ENCODE measurements at regions of chr20 and their contacts with region 1.

Region 1: GRCh38 chr20:36199345-36200257 is 36.7 kb upstream of the AAR2 start:
- DNase-seq: peak; percentile 86

Region 2: DNA sequence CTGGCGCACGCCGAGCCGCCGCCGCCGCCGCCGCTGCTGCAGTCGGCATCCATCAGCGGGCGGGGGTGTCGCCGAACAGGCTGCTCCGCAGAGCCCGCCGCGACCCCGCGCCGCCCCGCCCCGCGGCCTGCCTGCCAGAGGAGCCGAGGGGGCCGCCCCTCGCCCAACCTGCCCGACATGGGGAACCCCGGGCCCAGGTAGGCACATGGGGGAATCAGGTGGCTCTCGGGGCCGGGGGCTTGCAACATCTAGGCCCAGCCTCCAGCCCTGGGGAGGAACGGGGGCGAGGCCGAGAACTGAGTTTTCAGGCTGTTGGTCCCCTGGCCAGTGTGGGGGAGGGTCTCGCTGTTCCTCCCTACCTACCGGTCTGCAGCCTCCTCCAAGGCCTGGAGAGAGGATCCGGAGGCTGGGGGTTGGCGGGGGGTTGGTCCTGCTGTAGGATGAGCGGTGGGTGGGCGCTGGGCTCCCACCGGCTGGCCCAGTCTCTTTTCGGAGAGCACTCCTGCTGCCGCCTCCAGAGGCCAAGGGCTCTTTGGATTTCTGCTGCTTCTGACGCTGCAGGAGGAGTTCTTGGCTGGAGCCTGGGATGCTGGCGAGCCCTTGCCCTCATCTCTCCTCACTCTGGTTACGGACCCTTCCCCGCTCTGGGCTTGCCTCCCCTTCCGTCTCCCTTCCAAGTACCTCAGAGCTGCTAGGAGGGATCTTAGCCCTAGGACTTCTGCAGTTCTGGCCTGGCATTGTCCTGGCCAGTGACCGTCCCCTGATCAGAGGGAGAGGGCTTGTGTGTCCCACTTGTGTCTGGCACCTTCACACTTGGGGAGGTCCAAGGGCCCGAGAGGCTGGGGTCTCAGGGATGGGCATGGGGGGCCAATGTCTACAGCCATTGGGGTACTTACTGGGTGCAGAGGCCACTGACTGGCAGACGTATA is 44.6 kb before region 1 on chr20 and contains the start of gene EPB41L1:
- CTCF ChIA-PET with region 1: interaction called, 18 read pairs
- POLR2A ChIA-PET with region 1: no interaction called
- DNase-seq: peak; percentile 30